ENCODE measurements at regions of chr3 and their contacts with region 1.

Region 1: DNA sequence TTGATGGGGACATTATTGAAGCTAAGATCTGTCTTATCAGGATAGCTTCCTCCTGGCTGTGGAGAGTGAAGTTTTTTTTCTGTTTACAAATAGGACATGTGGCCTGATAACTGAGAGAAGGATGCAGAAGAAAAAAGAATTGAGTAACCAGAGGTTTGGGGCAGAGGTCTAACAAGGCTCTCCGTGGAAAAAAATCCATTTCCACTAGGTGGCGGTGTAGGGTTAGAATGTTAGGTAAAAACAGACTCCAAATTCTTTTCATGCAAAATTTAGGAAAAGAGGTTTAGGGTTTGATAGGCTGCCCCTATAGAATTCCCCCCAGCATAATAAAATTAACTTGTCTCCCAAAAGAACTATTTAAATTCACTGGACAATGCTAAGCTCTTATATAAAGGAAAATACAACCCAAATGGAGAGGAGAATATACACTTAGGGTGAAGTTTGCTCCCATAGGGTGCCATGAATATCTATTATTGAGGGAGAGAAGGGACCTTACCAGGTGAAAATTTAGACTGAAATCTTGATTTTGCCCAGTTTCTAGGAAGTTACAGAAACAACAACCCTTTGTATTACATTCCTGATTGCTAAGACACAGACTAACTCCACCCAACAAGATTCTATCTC is 1560.4 kb downstream of the OTOL1 start:
- DNase-seq: peak; percentile 2
- H3K4me3 ChIP-seq: no peak overlapping the region
- H3K27ac ChIP-seq: no peak overlapping the region
- H3K27me3 ChIP-seq: no peaks in the 10 kb centered on the region
- CTCF ChIP-seq: peak; percentile 72

Region 2: DNA sequence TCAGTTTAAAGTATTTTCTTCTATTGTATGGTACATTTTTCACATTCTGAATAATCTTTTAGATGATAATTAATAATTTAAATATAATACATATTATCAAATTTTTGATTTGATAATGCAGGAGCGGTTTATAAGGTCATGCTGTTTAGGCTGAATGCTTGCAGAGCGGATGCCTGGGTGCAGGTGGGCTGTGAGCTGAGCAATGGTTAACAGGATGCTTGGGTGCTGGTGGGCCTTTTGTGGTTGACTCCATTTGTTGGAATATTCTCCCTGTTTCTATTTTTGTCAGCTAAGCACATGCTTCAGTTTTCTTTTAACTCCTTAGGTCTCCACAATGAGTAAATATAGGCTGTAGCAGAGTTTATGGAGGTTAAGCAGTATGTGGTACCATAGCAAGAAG is 11.0 kb before region 1 on chr3:
- CTCF ChIA-PET with region 1: interaction called, 10 read pairs
- POLR2A ChIA-PET with region 1: no interaction called
- DNase-seq: no peak
- H3K4me3 ChIP-seq: no peak overlapping the region
- H3K27ac ChIP-seq: no peak overlapping the region
- H3K27me3 ChIP-seq: no peaks in the 10 kb centered on the region
- CTCF ChIP-seq: no peak

Region 3: DNA sequence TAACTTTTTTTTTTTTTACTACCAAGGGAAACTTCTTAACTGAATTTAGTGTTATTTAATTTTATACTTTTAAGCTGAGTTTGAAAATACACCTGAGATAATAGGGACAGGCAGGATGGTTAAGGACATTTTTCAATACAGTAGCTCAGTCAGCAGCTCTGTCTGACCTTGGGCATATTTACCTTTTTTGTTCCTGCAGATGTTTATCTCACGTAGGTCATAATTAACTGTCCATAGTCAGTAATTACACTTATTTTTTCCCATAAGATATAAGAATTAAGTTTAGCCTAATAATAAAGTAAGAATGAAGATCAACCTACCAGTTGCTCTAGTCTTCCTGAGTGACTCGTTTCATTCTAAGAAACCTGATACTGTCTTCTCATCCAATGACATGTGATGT is 13.0 kb after region 1 on chr3:
- CTCF ChIA-PET with region 1: interaction called, 10 read pairs
- POLR2A ChIA-PET with region 1: no interaction called
- DNase-seq: no peak
- H3K4me3 ChIP-seq: no peak overlapping the region
- H3K27ac ChIP-seq: no peak overlapping the region
- H3K27me3 ChIP-seq: no peaks in the 10 kb centered on the region
- CTCF ChIP-seq: no peak

Measured in AG04450 (cell line).